Gastrocnemius medialis (tissue), 4 donors: ENCODE measurements at regions of chr2 and their contacts with region 1.

Region 1: GRCh38 chr2:3959372-3959771 is 256.0 kb downstream of the DCDC2C start:
- DNase-seq: no peak
- ATAC-seq: no peak
- H3K4me3 ChIP-seq: no peak overlapping the region
- H3K27ac ChIP-seq: no peak overlapping the region
- H3K4me1 ChIP-seq: no peaks in the 10 kb centered on the region
- H3K27me3 ChIP-seq: no peaks in the 10 kb centered on the region
- CTCF ChIP-seq: peak in 4 of 5 experiments; percentile 19 to 64 (median 46)
- POLR2A ChIP-seq: no peak

Region 2: GRCh38 chr2:3518496-3519254 is 440.7 kb before region 1 on chr2:
- in situ Hi-C with region 1: no loop called
- intact Hi-C with region 1: no loop called
- DNase-seq: peak; percentile 98
- ATAC-seq: peak; percentile 85 to 89
- H3K4me3 ChIP-seq: peak overlapping the region; percentile 79 to 98 (median 90)
- H3K27ac ChIP-seq: peak overlapping the region; percentile 96 to 99 (median 97)
- H3K4me1 ChIP-seq: peaks cover 26 to 30% of the 10 kb centered on the region in 2 donors
- H3K27me3 ChIP-seq: no peaks in the 10 kb centered on the region
- CTCF ChIP-seq: no peak
- POLR2A ChIP-seq: peak; percentile 81 to 83

Region 3: GRCh38 chr2:4020153-4020552 is 60.8 kb after region 1 on chr2:
- in situ Hi-C with region 1: no loop called
- intact Hi-C with region 1: no loop called
- DNase-seq: no peak
- ATAC-seq: no peak
- H3K4me3 ChIP-seq: no peak overlapping the region
- H3K27ac ChIP-seq: no peak overlapping the region
- H3K4me1 ChIP-seq: no peaks in the 10 kb centered on the region
- H3K27me3 ChIP-seq: no peaks in the 10 kb centered on the region
- CTCF ChIP-seq: no peak
- POLR2A ChIP-seq: no peak

Region 4: DNA sequence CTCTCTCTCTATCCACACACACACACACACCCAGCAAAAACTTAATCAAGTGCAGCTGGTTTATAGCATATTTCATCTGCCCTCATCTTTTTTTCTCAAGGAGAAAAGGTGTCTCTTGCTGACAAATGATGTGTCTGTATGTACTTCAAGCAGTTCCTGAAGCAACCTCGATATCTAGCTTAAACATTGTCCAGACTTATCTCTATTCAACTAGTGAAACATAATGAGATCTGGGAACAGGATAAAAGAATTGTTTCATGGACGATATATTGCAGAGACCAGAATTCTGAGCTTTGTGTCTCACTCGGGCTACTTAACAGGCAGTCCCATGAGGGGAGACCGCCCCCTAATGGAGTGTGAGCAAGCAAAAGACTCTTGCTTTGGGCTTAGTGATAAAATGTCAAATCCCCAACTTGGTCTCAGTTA is 803.6 kb after region 1 on chr2:
- in situ Hi-C with region 1: loop called in 1 of 4 experiments (anchors 25 kb)
- intact Hi-C with region 1: no loop called
- DNase-seq: no peak
- ATAC-seq: no peak
- H3K4me3 ChIP-seq: no peak overlapping the region
- H3K27ac ChIP-seq: no peak overlapping the region
- H3K4me1 ChIP-seq: no peaks in the 10 kb centered on the region
- H3K27me3 ChIP-seq: no peaks in the 10 kb centered on the region
- CTCF ChIP-seq: peak in 1 of 5 experiments; percentile 6
- POLR2A ChIP-seq: no peak